ENCODE measurements at regions of chr19 and their contacts with region 1.

Region 1: DNA sequence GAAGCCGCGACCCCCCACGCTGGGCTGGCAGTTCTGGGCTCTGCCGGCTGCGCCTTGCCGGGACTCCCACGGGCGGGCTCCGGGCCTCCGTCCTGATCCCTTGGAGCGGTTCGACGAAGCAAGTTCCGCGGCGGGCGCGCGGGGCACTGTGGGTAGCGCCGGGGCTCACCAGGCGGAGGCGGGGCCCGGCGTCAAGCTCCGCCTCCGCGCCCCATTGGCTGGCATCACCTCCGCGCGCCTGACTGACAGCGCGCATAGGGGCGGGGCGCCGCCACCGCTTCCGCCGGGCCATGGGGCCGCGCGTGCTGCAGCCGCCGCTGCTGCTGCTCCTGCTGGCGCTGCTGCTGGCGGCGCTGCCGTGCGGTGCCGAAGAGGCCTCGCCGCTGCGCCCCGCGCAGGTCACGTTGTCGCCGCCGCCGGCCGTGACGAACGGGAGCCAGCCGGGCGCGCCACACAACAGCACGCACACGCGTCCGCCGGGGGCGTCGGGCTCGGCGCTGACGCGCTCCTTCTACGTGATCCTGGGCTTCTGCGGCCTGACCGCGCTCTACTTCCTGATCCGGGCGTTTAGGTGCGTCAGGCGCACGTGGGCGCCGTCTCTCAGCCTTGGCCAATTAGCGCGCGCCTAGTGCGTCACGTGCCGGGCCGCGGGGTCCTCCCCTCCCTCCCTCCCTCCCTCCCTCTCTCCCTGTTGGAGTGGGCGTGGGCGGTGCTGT is at the start of gene FAM174C:
- DNase-seq: peak; percentile 94 to 96
- H3K4me3 ChIP-seq: peak within 1 kb of the TSS; percentile 86
- H3K4me3 Mint-ChIP-seq: peak within 1 kb of the TSS; percentile 83
- H3K27ac Mint-ChIP-seq: peak within 1 kb of the TSS; percentile 91
- H3K4me1 ChIP-seq: peaks cover 23% of the 10 kb centered on the region
- H3K4me1 Mint-ChIP-seq: peaks cover 16% of the 10 kb centered on the region
- H3K27me3 ChIP-seq: no peaks in the 10 kb centered on the region
- H3K27me3 Mint-ChIP-seq: no peaks in the 10 kb centered on the region
- CTCF ChIP-seq: no peak
- total RNA-seq, gene FAM174C: 51.0 and 56.3 TPM in 2 replicates

Region 2: DNA sequence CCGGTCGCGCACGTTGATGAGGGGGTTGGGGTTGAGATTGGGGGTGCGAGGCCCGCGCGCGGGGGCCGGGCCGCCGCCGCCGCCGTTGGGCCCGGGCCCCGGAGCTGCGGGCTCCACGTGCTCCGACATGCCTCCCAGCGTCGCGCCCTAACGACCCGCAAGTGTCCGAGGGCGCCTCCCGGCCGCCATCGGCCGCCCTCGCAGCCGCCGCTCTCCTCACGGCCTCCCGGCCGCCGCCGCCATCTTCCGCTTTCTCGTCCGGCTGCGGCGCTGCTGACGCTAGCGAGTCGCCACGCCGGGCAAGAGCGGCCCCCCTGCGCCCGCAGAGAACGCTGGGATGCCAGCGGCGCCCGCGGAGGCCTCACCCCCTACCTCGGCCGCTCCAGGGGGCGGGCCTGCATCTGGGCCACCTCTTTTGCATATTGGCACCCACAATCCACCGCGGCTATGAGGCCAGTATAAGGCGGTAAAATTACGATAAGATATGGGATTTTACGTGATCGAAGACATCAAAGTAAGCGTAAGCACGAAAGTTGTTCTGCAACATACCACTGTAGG is 254.5 kb before region 1 on chr19 and contains the start of gene TMEM259:
- CTCF ChIA-PET with region 1: no interaction called
- POLR2A ChIA-PET with region 1: no interaction called
- intact Hi-C with region 1: no loop called
- DNase-seq: peak; percentile 97
- H3K4me3 ChIP-seq: peak within 1 kb of the TSS; percentile 62
- H3K4me3 Mint-ChIP-seq: peak within 1 kb of the TSS; percentile 95
- H3K27ac Mint-ChIP-seq: peak within 1 kb of the TSS; percentile 99
- H3K4me1 ChIP-seq: peaks cover 23% of the 10 kb centered on the region
- H3K4me1 Mint-ChIP-seq: peaks cover 15% of the 10 kb centered on the region
- H3K27me3 ChIP-seq: no peaks in the 10 kb centered on the region
- H3K27me3 Mint-ChIP-seq: no peaks in the 10 kb centered on the region
- CTCF ChIP-seq: no peak
- total RNA-seq, gene TMEM259: 148 and 154 TPM in 2 replicates

Region 3: GRCh38 chr19:1223018-1223855 is 52.2 kb before region 1 on chr19:
- CTCF ChIA-PET with region 1: no interaction called
- POLR2A ChIA-PET with region 1: no interaction called
- intact Hi-C with region 1: no loop called
- DNase-seq: peak in 1 of 2 experiments; percentile 73
- H3K4me3 ChIP-seq: no peak overlapping the region
- H3K4me3 Mint-ChIP-seq: no peak overlapping the region
- H3K27ac Mint-ChIP-seq: no peak overlapping the region
- H3K4me1 ChIP-seq: no peaks in the 10 kb centered on the region
- H3K4me1 Mint-ChIP-seq: no peaks in the 10 kb centered on the region
- H3K27me3 ChIP-seq: no peaks in the 10 kb centered on the region
- H3K27me3 Mint-ChIP-seq: no peaks in the 10 kb centered on the region
- CTCF ChIP-seq: peak; percentile 31 to 71

Region 4: DNA sequence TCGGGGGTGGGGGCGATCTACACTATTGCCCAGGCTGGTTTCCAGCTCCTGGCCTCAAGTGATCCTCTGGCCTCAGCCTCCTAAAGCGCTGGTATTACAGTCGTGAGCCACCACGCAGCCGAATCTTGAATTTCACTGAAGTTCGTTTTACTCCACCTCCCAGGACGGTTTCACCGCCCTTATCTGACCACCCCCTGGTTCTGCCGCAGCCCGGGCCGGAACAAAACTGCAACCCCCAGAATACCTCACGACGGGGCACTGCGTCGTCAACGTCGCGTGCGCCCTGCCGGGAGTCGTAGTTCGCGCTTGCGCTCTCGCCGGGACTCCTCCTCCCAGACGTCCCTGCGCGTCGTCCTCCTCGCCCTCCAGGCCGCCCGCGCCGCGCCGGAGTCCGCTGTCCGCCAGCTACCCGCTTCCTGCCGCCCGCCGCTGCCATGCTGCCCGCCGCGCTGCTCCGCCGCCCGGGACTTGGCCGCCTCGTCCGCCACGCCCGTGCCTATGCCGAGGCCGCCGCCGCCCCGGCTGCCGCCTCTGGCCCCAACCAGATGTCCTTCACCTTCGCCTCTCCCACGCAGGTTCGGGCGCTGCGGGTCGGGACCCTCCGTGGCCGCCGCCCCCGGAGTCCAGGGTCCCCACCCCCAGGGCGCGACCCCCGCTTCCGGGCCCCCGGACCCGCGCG is 33.9 kb before region 1 on chr19 and contains the start of gene ATP5F1D:
- CTCF ChIA-PET with region 1: interaction called, 11 read pairs
- POLR2A ChIA-PET with region 1: interaction called, 10 read pairs
- intact Hi-C with region 1: no loop called
- DNase-seq: peak; percentile 92
- H3K4me3 ChIP-seq: peak within 1 kb of the TSS; percentile 45
- H3K4me3 Mint-ChIP-seq: peak within 1 kb of the TSS; percentile 76
- H3K27ac Mint-ChIP-seq: peak within 1 kb of the TSS; percentile 81
- H3K4me1 ChIP-seq: peaks cover 43% of the 10 kb centered on the region
- H3K4me1 Mint-ChIP-seq: no peaks in the 10 kb centered on the region
- H3K27me3 ChIP-seq: no peaks in the 10 kb centered on the region
- H3K27me3 Mint-ChIP-seq: no peaks in the 10 kb centered on the region
- CTCF ChIP-seq: no peak
- total RNA-seq, gene ATP5F1D: 126 and 140 TPM in 2 replicates

Region 5: DNA sequence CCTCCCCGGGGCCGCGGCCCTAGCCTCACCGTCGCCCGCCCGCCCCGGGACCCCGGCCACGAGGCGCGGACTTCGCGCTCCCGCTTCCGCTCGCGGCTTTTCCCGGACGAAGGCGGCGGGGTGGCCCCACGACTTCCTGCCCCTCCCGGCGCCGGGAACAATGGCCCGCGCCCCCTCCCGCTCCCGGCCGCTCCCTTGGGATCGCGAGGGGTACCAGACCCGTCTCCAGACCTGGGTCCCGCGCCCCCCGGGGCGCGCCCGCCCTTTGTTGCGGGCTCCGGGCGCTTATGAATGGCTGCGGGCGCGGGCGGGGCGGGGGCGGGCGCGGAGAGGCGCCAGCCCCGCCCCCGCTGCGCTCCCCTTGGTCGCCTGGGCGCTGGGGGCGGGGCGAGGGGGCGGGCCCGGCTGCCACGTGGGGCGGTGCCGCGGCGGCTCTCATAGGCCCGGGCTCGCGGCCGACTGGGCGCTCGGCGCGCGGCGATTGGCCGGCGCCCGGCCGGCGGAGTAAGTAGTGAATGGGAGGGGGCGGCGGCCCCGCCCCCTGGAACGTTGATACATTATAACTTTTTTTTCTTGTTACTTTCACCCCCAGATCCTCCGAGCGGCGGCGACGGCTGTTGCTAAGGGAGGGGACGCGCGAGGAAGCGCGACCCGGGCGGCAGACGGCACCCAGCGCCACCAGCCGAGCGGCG is 26.0 kb before region 1 on chr19:
- CTCF ChIA-PET with region 1: interaction called, 11 read pairs
- POLR2A ChIA-PET with region 1: interaction called, 10 read pairs
- intact Hi-C with region 1: no loop called
- DNase-seq: peak; percentile 92
- H3K4me3 ChIP-seq: peak overlapping the region; percentile 88
- H3K4me3 Mint-ChIP-seq: peak overlapping the region; percentile 96
- H3K27ac Mint-ChIP-seq: no peak overlapping the region
- H3K4me1 ChIP-seq: peaks cover 35% of the 10 kb centered on the region
- H3K4me1 Mint-ChIP-seq: peaks cover 6% of the 10 kb centered on the region
- H3K27me3 ChIP-seq: no peaks in the 10 kb centered on the region
- H3K27me3 Mint-ChIP-seq: no peaks in the 10 kb centered on the region
- CTCF ChIP-seq: no peak

Region 6: GRCh38 chr19:1295169-1296012 is 20.0 kb after region 1 on chr19:
- CTCF ChIA-PET with region 1: no interaction called
- POLR2A ChIA-PET with region 1: no interaction called
- intact Hi-C with region 1: no loop called
- DNase-seq: peak in 1 of 2 experiments; percentile 38
- H3K4me3 ChIP-seq: no peak overlapping the region
- H3K4me3 Mint-ChIP-seq: no peak overlapping the region
- H3K27ac Mint-ChIP-seq: no peak overlapping the region
- H3K4me1 ChIP-seq: peaks cover 17% of the 10 kb centered on the region
- H3K4me1 Mint-ChIP-seq: no peaks in the 10 kb centered on the region
- H3K27me3 ChIP-seq: no peaks in the 10 kb centered on the region
- H3K27me3 Mint-ChIP-seq: no peaks in the 10 kb centered on the region
- CTCF ChIP-seq: no peak

Region 7: DNA sequence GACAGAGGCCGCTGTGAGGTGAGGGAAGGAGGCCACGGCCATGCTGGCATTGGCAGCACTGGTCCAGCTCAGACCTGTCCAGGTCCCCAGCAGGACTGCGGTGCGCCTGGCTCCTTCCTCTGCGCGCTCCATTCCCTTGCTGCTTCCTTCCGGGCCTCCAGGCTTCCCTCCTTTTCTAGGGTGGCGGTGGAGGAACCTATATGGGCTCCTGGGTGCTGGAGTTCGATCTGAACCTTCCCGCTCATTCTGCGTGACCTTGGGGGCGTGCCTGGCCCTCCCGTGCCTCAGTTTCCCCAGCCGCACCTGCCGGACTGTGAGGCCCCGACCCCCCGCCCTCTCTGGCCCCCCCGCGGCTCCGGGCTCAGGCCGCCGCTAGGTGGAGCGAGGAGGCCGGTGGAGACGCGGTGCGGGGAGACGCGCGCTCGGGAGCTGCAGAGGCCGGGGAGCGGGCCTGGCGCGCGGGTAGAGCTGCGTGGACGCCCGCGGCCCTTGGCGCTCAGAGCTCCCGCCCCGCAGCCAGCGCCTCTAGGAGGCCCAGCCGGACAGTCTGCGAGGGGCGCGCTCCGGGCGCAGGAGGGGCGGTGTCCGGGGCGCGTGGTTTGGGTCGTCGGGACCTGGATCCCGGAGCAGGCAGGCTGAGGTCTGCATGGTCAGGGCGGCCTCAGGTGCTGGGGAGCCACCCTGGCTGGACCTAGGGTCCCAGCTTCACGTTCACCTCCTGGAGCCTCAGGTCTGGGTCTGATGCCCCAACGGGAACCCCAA is 40.2 kb after region 1 on chr19:
- CTCF ChIA-PET with region 1: interaction called, 3 read pairs
- POLR2A ChIA-PET with region 1: no interaction called
- intact Hi-C with region 1: loop called (anchors 5 kb)
- DNase-seq: peak; percentile 50 to 76
- H3K4me3 ChIP-seq: peak overlapping the region; percentile 26
- H3K4me3 Mint-ChIP-seq: peak overlapping the region; percentile 33
- H3K27ac Mint-ChIP-seq: peak overlapping the region; percentile 39
- H3K4me1 ChIP-seq: peaks cover 14% of the 10 kb centered on the region
- H3K4me1 Mint-ChIP-seq: no peaks in the 10 kb centered on the region
- H3K27me3 ChIP-seq: no peaks in the 10 kb centered on the region
- H3K27me3 Mint-ChIP-seq: no peaks in the 10 kb centered on the region
- CTCF ChIP-seq: peak; percentile 56 to 66

Region 8: GRCh38 chr19:1373534-1374249 is 98.3 kb after region 1 on chr19:
- CTCF ChIA-PET with region 1: interaction called, 9 read pairs
- POLR2A ChIA-PET with region 1: no interaction called
- intact Hi-C with region 1: loop called (anchors 1 kb)
- DNase-seq: no peak
- H3K4me3 ChIP-seq: no peak overlapping the region
- H3K4me3 Mint-ChIP-seq: no peak overlapping the region
- H3K27ac Mint-ChIP-seq: no peak overlapping the region
- H3K4me1 ChIP-seq: no peaks in the 10 kb centered on the region
- H3K4me1 Mint-ChIP-seq: no peaks in the 10 kb centered on the region
- H3K27me3 ChIP-seq: no peaks in the 10 kb centered on the region
- H3K27me3 Mint-ChIP-seq: no peaks in the 10 kb centered on the region
- CTCF ChIP-seq: no peak